Naive thymus-derived CD4-positive, alpha-beta T cell (primary cell): ENCODE measurements at regions of chr18 and their contacts with region 1.

Region 1: GRCh38 chr18:58863539-58864145 is 1.0 kb upstream of the ZNF532 start:
- DNase-seq: peak in 8 of 9 donors; percentile 11 to 39 (median 24)
- ATAC-seq: peak; percentile 73
- H3K4me3 ChIP-seq: no peak overlapping the region
- H3K4me3 Mint-ChIP-seq: peak overlapping the region in 8 of 10 donors; percentile 16 to 78 (median 51)
- H3K27ac ChIP-seq: no peak overlapping the region
- H3K27ac Mint-ChIP-seq: peak overlapping the region in 1 of 9 donors; percentile 86
- H3K4me1 ChIP-seq: peaks cover 6 to 8% of the 10 kb centered on the region in 2 donors
- H3K4me1 Mint-ChIP-seq: peaks cover 4 to 22% (median 13%) of the 10 kb centered on the region in 7 donors
- H3K27me3 ChIP-seq: peaks cover 0 to 4% of the 10 kb centered on the region in 2 donors
- H3K27me3 Mint-ChIP-seq: peaks cover 51 to 87% (median 66%) of the 10 kb centered on the region in 5 donors

Region 2: DNA sequence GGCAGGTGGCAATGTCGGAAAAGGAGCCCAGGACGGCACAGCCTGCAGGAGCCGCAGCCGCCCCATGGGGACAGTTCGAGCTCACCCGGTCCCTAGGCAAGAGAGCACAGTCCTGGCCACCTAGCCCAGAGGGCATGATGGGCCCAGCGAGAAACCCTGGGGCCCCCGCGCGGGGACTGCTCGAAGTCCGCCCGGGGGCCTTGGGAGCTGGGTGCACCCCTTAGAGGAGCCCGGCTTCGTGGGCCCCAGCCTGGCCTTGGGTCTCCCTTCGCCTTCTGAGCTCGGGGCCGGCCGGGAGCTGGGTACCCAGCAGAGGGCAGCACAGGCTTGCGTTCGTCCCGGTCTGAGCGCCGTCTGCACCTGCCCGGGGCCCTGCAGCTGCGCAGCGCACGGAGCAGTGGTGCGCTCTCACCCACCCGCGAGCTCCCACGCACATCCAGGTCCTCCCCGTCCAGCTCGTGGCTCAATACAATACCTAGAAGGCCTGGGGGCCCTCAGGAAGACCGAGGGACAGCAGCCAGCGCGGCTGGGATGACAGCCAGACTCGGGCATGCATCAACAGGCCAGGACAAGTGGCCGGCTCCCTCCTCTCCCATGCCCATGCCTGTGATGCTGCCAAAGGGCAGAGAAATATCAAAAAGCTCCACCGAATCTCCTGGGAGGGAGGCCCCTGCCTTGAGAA is 95.2 kb before region 1 on chr18:
- CTCF ChIA-PET with region 1: no interaction called
- POLR2A ChIA-PET with region 1: no interaction called
- intact Hi-C with region 1: no loop called
- DNase-seq: peak; percentile 40 to 71 (median 60)
- ATAC-seq: peak; percentile 89
- H3K4me3 ChIP-seq: no peak overlapping the region
- H3K4me3 Mint-ChIP-seq: peak overlapping the region in 8 of 10 donors; percentile 36 to 81 (median 66)
- H3K27ac ChIP-seq: no peak overlapping the region
- H3K27ac Mint-ChIP-seq: no peak overlapping the region
- H3K4me1 ChIP-seq: peaks cover 6 to 17% of the 10 kb centered on the region in 2 donors
- H3K4me1 Mint-ChIP-seq: peaks cover 0 to 19% (median 16%) of the 10 kb centered on the region in 7 donors
- H3K27me3 ChIP-seq: peaks cover 0 to 10% of the 10 kb centered on the region in 2 donors
- H3K27me3 Mint-ChIP-seq: peaks cover 30 to 63% (median 37%) of the 10 kb centered on the region in 5 donors

Region 3: DNA sequence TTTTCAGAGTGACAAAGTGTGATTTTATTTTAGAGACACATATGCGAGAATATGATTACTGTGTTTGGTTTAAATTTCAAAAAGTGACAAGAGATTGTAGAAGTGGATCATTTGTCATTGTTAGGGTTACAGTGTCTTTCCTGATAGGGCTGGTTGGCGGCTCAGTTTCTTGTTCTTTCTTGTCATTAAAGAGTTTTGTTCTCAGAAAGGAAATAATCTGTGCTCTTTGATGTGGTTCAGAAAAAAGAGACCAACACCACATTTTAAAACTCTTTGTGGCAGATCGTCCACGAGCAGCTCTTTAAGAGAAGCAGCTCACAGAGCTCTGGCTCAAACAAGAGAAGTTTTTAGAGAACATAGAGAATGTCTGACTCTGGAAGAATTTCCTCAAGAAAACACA is 44.6 kb before region 1 on chr18:
- CTCF ChIA-PET with region 1: no interaction called
- POLR2A ChIA-PET with region 1: no interaction called
- intact Hi-C with region 1: loop called in 1 of 2 experiments (anchors 1 kb)
- DNase-seq: peak in 7 of 9 donors; percentile 47 to 84 (median 78)
- ATAC-seq: peak; percentile 82
- H3K4me3 ChIP-seq: no peak overlapping the region
- H3K4me3 Mint-ChIP-seq: peak overlapping the region in 8 of 10 donors; percentile 4 to 75 (median 27)
- H3K27ac ChIP-seq: no peak overlapping the region
- H3K27ac Mint-ChIP-seq: peak overlapping the region in 5 of 9 donors; percentile 13 to 83 (median 76)
- H3K4me1 ChIP-seq: peaks cover 0 to 16% of the 10 kb centered on the region in 2 donors
- H3K4me1 Mint-ChIP-seq: peaks cover 12 to 21% (median 17%) of the 10 kb centered on the region in 7 donors
- H3K27me3 ChIP-seq: peaks cover 3 to 14% of the 10 kb centered on the region in 2 donors
- H3K27me3 Mint-ChIP-seq: peaks cover 58 to 80% (median 71%) of the 10 kb centered on the region in 5 donors

Region 4: GRCh38 chr18:58900015-58900649 is 36.5 kb after region 1 on chr18:
- CTCF ChIA-PET with region 1: no interaction called
- POLR2A ChIA-PET with region 1: no interaction called
- intact Hi-C with region 1: no loop called
- DNase-seq: no peak
- ATAC-seq: no peak
- H3K4me3 ChIP-seq: no peak overlapping the region
- H3K4me3 Mint-ChIP-seq: no peak overlapping the region
- H3K27ac ChIP-seq: no peak overlapping the region
- H3K27ac Mint-ChIP-seq: no peak overlapping the region
- H3K4me1 ChIP-seq: peaks cover 0 to 3% of the 10 kb centered on the region in 2 donors
- H3K4me1 Mint-ChIP-seq: peaks cover 6 to 21% (median 11%) of the 10 kb centered on the region in 7 donors
- H3K27me3 ChIP-seq: no peaks in the 10 kb centered on the region
- H3K27me3 Mint-ChIP-seq: peaks cover 0 to 5% (median 3%) of the 10 kb centered on the region in 5 donors